Right cardiac atrium (tissue), 5 donors: ENCODE measurements at regions of chr3 and their contacts with region 1.

Region 1: DNA sequence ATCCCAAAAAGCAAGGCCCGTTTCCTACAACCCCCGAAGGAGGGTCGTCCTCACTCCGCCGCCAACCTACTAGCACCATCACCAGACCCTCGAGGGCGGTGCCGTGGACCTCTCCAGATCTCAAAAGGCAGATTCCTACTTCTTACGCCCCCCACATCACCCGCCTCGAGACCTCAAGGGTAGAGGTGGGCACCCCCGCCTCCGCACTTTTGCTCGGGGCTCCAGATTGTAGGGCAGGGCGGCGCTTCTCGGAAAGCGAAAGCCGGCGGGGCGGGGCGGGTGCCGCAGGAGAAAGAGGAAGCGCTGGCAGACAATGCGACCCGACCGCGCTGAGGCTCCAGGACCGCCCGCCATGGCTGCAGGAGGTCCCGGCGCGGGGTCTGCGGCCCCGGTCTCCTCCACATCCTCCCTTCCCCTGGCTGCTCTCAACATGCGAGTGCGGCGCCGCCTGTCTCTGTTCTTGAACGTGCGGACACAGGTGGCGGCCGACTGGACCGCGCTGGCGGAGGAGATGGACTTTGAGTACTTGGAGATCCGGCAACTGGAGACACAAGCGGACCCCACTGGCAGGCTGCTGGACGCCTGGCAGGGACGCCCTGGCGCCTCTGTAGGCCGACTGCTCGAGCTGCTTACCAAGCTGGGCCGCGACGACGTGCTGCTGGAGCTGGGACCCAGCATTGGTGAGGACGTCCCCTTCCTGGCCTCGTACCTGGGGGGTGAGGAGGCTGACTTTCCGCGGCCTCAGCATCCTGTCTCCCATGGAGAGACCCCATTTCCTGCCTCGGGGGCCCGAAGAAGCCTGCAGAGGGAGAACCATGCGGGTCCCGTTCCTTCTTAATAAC is at the start of gene MYD88:
- DNase-seq: peak; percentile 89 to 95 (median 95)
- ATAC-seq: peak; percentile 57 to 65
- H3K4me3 ChIP-seq: peak within 1 kb of the TSS; percentile 60
- H3K27ac ChIP-seq: peak within 1 kb of the TSS; percentile 97
- H3K4me1 ChIP-seq: peaks cover 10% of the 10 kb centered on the region
- H3K27me3 ChIP-seq: no peaks in the 10 kb centered on the region
- total RNA-seq, gene MYD88: 11.1 to 19.8 (median 13.1) TPM

Region 2: DNA sequence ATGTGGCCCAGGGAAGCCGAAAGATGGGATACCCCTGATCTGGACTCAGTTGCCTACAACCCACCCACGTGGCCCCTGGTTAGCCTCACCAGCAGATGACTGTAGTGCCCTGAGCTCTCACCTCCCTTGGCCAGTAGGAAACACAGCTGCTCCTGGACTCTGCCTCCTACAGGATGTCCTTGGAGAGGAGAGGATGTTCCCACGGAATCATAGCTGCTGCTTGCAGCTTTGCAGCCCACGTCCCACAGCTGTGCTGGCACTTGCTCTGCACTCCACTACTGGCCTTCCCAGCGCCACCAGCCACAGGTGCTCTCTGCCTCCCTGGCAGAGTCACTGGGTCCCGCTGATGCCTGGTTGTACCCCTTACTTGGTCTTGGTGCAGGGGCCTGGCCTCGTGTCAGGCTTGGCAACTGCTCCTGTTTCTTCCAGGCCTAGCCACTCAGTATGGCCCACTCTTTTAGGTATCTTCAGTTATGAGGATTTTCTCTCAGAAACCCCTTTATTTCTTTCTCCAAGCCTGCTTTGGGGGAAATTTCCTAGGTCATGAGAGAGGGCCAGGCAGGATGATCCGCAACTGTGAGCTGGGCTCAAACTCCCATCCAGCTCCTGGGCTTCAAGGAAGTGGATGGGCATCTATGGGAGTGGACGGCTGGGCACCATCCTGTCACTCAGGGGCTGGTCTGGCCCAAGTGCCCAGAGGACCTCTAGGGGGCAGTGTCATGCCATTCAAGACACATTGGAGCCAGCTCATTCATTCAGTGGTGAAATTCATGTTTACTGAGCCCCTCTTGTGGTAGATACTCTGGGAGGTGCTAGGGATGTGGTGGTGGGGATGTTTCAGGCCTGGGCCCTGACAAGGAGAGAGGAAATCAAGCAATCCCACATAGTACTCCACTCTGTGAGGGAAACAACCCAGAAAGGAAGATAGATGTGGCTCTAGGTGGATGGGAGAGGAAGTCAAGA is 164.2 kb before region 1 on chr3:
- intact Hi-C with region 1: no loop called
- DNase-seq: peak; percentile 60 to 83 (median 82)
- ATAC-seq: peak; percentile 80 to 87
- H3K4me3 ChIP-seq: no peak overlapping the region
- H3K27ac ChIP-seq: no peak overlapping the region
- H3K4me1 ChIP-seq: peaks cover 2% of the 10 kb centered on the region
- H3K27me3 ChIP-seq: no peaks in the 10 kb centered on the region

Region 3: DNA sequence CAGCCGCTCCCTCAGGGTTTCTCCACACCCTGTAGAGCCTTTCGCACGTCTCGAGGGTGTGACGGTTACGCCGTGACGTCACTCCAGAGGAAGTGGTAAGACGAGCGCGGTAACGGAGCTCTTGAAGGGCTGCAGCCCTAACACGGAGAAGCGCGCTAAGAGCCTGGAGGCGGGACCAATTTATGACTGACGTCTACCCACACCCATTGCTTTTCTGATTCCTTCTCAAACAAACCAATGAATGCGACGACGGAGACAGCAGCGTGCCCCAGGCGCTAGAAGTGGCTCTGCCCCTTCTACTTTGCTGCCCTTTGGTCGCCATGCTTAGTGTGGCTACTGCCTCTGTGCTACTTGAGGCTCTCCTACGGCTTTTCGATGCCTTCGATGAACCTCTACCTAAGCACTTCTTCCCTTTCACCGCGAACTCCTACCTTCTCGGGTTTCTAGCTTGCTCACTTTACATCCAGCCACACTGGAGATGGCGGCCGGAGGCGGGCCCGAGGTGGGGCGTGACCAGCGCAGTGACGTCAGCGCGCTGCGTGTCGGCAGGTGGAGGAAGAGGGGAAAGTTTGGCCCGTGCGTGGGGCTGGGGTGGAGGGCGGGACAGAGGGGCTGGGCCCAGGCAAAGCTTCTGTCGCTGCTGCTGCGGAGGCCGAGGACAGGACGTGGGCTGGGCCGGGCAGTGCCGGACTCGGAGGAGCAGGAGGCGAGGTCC is 26.6 kb after region 1 on chr3 and contains the start of gene OXSR1:
- intact Hi-C with region 1: loop called in 1 of 4 experiments (anchors 2 kb)
- DNase-seq: peak; percentile 99 to 100 (median 100)
- ATAC-seq: peak; percentile 96 to 98
- H3K4me3 ChIP-seq: peak within 1 kb of the TSS; percentile 63
- H3K27ac ChIP-seq: peak within 1 kb of the TSS; percentile 91
- H3K4me1 ChIP-seq: peaks cover 3% of the 10 kb centered on the region
- H3K27me3 ChIP-seq: no peaks in the 10 kb centered on the region
- total RNA-seq, gene OXSR1: 20.2 to 39.1 (median 25.1) TPM